IMR-90 (cell line): ENCODE measurements at regions of chr10 and their contacts with region 1.

Region 1: DNA sequence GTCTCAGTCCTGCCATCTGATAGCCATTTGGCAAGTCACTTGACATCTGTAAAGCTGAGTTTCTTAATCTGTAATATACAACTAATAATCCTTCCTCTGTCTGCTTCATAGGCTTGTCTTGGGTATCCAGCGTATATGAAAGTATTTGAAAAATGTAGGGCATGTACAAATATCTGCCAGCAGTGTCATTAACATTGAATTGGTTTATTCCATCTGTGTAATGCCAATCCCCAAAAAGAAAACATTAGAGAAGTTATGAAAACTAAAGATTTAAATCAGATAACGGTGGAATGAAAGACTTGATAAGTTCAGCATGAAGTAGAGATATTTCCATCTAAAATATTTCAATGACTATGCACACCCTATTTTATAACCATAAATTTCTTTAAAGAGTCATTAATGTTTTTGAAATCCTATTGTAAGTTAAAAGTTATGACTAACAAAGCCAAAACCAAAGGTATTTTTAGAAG is 9.8 kb upstream of the RTKN2 start:
- DNase-seq: peak; percentile 11
- ATAC-seq: peak; percentile 89
- H3K4me3 ChIP-seq: no peak overlapping the region
- H3K27ac ChIP-seq: no peak overlapping the region
- H3K4me1 ChIP-seq: peaks cover 2% of the 10 kb centered on the region; the same call in 1 of the 2 replicates
- H3K27me3 ChIP-seq: no peaks in the 10 kb centered on the region
- CTCF ChIP-seq: no peak
- POLR2A ChIP-seq: no peak
- RAD21 ChIP-seq: no peak

Region 2: DNA sequence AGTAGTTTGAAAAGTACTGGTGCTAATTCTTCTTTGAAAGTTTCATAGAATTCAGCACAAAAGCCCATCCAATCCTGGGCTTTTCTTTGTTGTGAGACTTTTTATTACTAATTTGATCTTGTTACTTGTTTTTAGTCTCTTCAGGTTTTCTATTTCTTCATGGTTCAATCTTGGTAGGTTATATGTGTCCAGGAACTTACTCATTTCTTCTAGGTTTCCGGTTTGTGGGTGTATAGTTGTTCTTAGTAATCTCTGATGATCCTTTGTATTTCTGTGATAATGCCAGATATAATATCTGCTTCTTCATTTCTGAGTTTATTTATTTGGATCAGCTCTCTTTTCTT is 157.3 kb before region 1 on chr10:
- CTCF ChIA-PET with region 1: no interaction called
- POLR2A ChIA-PET with region 1: no interaction called
- dilution Hi-C with region 1: no loop called
- in situ Hi-C with region 1: no loop called
- intact Hi-C with region 1: no loop called
- DNase-seq: no peak
- ATAC-seq: no peak
- H3K4me3 ChIP-seq: no peak overlapping the region
- H3K27ac ChIP-seq: no peak overlapping the region
- H3K4me1 ChIP-seq: no peaks in the 10 kb centered on the region
- H3K27me3 ChIP-seq: no peaks in the 10 kb centered on the region
- CTCF ChIP-seq: no peak
- POLR2A ChIP-seq: no peak
- RAD21 ChIP-seq: no peak

Region 3: GRCh38 chr10:62354916-62355315 is 76.4 kb after region 1 on chr10:
- CTCF ChIA-PET with region 1: no interaction called
- POLR2A ChIA-PET with region 1: no interaction called
- dilution Hi-C with region 1: no loop called
- in situ Hi-C with region 1: no loop called
- intact Hi-C with region 1: loop called (anchors 5 kb)
- DNase-seq: peak; percentile 32
- ATAC-seq: no peak
- H3K4me3 ChIP-seq: no peak overlapping the region
- H3K27ac ChIP-seq: no peak overlapping the region
- H3K4me1 ChIP-seq: no peaks in the 10 kb centered on the region
- H3K27me3 ChIP-seq: no peaks in the 10 kb centered on the region
- CTCF ChIP-seq: no peak
- POLR2A ChIP-seq: no peak
- RAD21 ChIP-seq: no peak